Sigmoid colon (tissue), 7 donors: ENCODE measurements at regions of chr3 and their contacts with region 1.

Region 1: GRCh38 chr3:100463002-100463401 is 29.4 kb upstream of the TMEM45A start:
- DNase-seq: no peak
- H3K4me3 ChIP-seq: no peak overlapping the region
- H3K27ac ChIP-seq: no peak overlapping the region
- H3K4me1 ChIP-seq: no peaks in the 10 kb centered on the region
- H3K27me3 ChIP-seq: no peaks in the 10 kb centered on the region
- CTCF ChIP-seq: peak; percentile 14 to 63 (median 58)
- EP300 ChIP-seq: no peak
- POLR2A ChIP-seq: no peak

Region 2: DNA sequence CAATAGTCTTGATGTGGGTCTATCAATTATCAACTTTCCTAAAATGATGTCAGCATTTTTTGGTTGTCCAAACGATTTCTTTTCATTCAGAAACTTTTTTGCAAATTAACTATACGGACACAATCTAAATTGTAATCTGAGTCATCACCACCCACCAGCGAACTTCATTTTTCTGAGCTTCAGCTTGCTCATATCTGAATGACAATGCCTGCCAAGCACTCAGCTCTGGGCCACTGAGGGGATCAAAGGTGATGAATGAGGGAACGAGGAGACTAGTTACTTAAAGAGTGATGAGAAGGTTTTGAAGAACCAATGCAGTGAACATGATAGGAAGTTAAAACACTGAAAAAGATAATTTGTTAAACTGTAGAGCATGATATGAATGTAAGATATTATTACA is 217.1 kb before region 1 on chr3:
- intact Hi-C with region 1: no loop called
- DNase-seq: no peak
- H3K4me3 ChIP-seq: no peak overlapping the region
- H3K27ac ChIP-seq: no peak overlapping the region
- H3K4me1 ChIP-seq: no peaks in the 10 kb centered on the region
- H3K27me3 ChIP-seq: no peaks in the 10 kb centered on the region
- CTCF ChIP-seq: no peak
- EP300 ChIP-seq: no peak
- POLR2A ChIP-seq: no peak

Region 3: GRCh38 chr3:100506355-100506754 is 43.4 kb after region 1 on chr3:
- intact Hi-C with region 1: no loop called
- DNase-seq: no peak
- H3K4me3 ChIP-seq: no peak overlapping the region
- H3K27ac ChIP-seq: no peak overlapping the region
- H3K4me1 ChIP-seq: no peaks in the 10 kb centered on the region
- H3K27me3 ChIP-seq: no peaks in the 10 kb centered on the region
- CTCF ChIP-seq: no peak
- EP300 ChIP-seq: no peak
- POLR2A ChIP-seq: no peak

Region 4: GRCh38 chr3:100590114-100590839 is 127.3 kb after region 1 on chr3:
- intact Hi-C with region 1: loop called (anchors 1 kb)
- DNase-seq: peak; percentile 77
- H3K4me3 ChIP-seq: no peak overlapping the region
- H3K27ac ChIP-seq: no peak overlapping the region
- H3K4me1 ChIP-seq: peaks cover 0 to 13% (median 7%) of the 10 kb centered on the region in 4 donors
- H3K27me3 ChIP-seq: no peaks in the 10 kb centered on the region
- CTCF ChIP-seq: peak; percentile 69 to 87 (median 75)
- EP300 ChIP-seq: no peak
- POLR2A ChIP-seq: no peak